Activated CD4-positive, alpha-beta T cell treated with anti-CD3 and anti-CD28 coated beads for 36 hours (primary cell): ENCODE measurements at regions of chr18 and their contacts with region 1.

Region 1: GRCh38 chr18:48675352-48675761 is 136.5 kb downstream of the CTIF start:
- DNase-seq: peak; percentile 91
- ATAC-seq: peak; percentile 97
- H3K4me3 Mint-ChIP-seq: no peak overlapping the region
- H3K27ac Mint-ChIP-seq: no peak overlapping the region
- H3K4me1 Mint-ChIP-seq: peaks cover 2% of the 10 kb centered on the region
- H3K27me3 Mint-ChIP-seq: no peaks in the 10 kb centered on the region

Region 2: GRCh38 chr18:48928787-48929186 is 253.4 kb after region 1 on chr18:
- CTCF ChIA-PET with region 1: no interaction called
- POLR2A ChIA-PET with region 1: no interaction called
- intact Hi-C with region 1: loop called in 1 of 2 experiments (anchors 10 kb)
- DNase-seq: peak; percentile 86
- ATAC-seq: peak; percentile 75
- H3K4me3 Mint-ChIP-seq: peak overlapping the region; percentile 56
- H3K27ac Mint-ChIP-seq: peak overlapping the region; percentile 85
- H3K4me1 Mint-ChIP-seq: peaks cover 94% of the 10 kb centered on the region
- H3K27me3 Mint-ChIP-seq: no peaks in the 10 kb centered on the region

Region 3: DNA sequence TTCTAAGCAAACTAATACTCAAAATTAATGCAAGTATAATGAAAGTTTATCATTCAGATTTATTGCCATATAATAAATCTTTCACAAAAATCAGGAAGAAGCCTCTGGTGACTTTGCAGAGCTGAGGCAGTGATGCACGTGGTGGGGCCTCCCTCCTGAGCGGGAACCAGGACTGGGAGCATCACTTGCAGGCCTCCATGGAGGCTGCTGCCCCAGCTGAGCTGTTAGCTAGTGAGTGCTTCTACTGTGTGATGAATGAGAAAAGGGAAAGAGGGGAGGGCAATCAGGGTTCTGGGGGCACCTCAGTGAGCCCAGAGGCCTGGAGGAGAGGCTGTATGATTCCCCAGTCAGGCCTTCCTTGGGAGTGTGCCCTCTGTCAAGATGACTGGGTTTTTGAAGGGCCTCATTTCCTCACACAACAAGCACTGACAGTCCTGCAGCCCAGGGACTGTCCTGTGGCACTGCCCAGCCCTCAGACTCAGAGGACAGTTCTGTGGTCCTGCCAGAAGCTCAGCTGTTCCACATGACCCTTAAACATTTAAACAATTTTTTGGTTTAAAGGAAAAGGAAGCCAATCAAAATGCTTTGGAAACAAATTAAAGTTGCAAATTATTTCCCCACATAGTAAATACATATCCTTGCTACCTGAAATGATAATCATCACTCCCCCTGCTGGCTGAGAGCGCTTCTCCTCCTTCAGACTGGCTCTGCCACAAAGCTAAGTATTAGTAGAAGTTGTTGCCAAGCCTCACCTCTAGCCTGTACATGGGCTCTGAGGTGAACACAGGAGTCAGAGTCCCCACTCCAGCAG is 366.3 kb after region 1 on chr18:
- CTCF ChIA-PET with region 1: interaction called, 3 read pairs
- POLR2A ChIA-PET with region 1: no interaction called
- intact Hi-C with region 1: loop called (anchors 1 to 10 kb)
- DNase-seq: peak; percentile 56
- ATAC-seq: peak; percentile 51
- H3K4me3 Mint-ChIP-seq: no peak overlapping the region
- H3K27ac Mint-ChIP-seq: no peak overlapping the region
- H3K4me1 Mint-ChIP-seq: peaks cover 10% of the 10 kb centered on the region
- H3K27me3 Mint-ChIP-seq: no peaks in the 10 kb centered on the region

Region 4: GRCh38 chr18:49193897-49194296 is 518.5 kb after region 1 on chr18:
- CTCF ChIA-PET with region 1: no interaction called
- POLR2A ChIA-PET with region 1: no interaction called
- intact Hi-C with region 1: no loop called
- DNase-seq: no peak
- ATAC-seq: no peak
- H3K4me3 Mint-ChIP-seq: no peak overlapping the region
- H3K27ac Mint-ChIP-seq: no peak overlapping the region
- H3K4me1 Mint-ChIP-seq: no peaks in the 10 kb centered on the region
- H3K27me3 Mint-ChIP-seq: no peaks in the 10 kb centered on the region

Region 5: DNA sequence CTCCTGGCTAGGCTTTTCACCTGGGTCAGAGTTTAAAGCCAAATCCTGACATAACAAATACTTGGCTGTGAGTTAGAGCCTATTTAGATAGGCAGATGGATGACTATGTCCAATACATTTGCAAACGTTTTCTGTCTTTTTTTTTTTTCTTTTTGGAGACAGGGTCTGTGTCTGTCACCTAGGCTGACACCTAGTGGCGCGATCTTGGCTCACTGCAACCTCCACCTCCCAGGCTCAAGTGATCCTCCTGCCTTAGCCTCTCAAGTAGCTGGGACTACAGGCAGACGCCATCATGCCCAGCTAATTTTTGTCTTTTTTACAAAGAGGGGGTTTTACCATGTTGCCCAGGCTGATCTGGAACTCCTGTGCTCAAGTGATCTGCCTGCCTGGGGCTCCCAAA is 660.3 kb after region 1 on chr18:
- CTCF ChIA-PET with region 1: no interaction called
- POLR2A ChIA-PET with region 1: no interaction called
- intact Hi-C with region 1: loop called in 1 of 2 experiments (anchors 10 kb)
- DNase-seq: peak; percentile 47
- ATAC-seq: no peak
- H3K4me3 Mint-ChIP-seq: no peak overlapping the region
- H3K27ac Mint-ChIP-seq: no peak overlapping the region
- H3K4me1 Mint-ChIP-seq: no peaks in the 10 kb centered on the region
- H3K27me3 Mint-ChIP-seq: no peaks in the 10 kb centered on the region

Region 6: GRCh38 chr18:49500201-49500921 is 825.0 kb after region 1 on chr18:
- CTCF ChIA-PET with region 1: no interaction called
- POLR2A ChIA-PET with region 1: no interaction called
- intact Hi-C with region 1: loop called in 1 of 2 experiments (anchors 10 kb)
- DNase-seq: no peak
- ATAC-seq: no peak
- H3K4me3 Mint-ChIP-seq: no peak overlapping the region
- H3K27ac Mint-ChIP-seq: no peak overlapping the region
- H3K4me1 Mint-ChIP-seq: no peaks in the 10 kb centered on the region
- H3K27me3 Mint-ChIP-seq: peaks cover 10% of the 10 kb centered on the region